Ascending aorta (tissue), 2 donors: ENCODE measurements at regions of chr2 and their contacts with region 1.

Region 1: GRCh38 chr2:43542285-43542937 is 53.4 kb downstream of the THADA start:
- DNase-seq: no peak
- H3K4me3 ChIP-seq: no peak overlapping the region
- H3K27ac ChIP-seq: peak overlapping the region in 1 of 2 donors; percentile 38
- H3K4me1 ChIP-seq: peaks cover 3 to 32% of the 10 kb centered on the region in 2 donors
- H3K27me3 ChIP-seq: no peaks in the 10 kb centered on the region
- CTCF ChIP-seq: peak; percentile 61 to 79 (median 62)

Region 2: GRCh38 chr2:42944779-42945415 is 597.5 kb before region 1 on chr2:
- intact Hi-C with region 1: loop called (anchors 5 kb)
- DNase-seq: no peak
- H3K4me3 ChIP-seq: no peak overlapping the region
- H3K27ac ChIP-seq: no peak overlapping the region
- H3K4me1 ChIP-seq: peaks cover 0 to 3% of the 10 kb centered on the region in 2 donors
- H3K27me3 ChIP-seq: no peaks in the 10 kb centered on the region
- CTCF ChIP-seq: no peak

Region 3: DNA sequence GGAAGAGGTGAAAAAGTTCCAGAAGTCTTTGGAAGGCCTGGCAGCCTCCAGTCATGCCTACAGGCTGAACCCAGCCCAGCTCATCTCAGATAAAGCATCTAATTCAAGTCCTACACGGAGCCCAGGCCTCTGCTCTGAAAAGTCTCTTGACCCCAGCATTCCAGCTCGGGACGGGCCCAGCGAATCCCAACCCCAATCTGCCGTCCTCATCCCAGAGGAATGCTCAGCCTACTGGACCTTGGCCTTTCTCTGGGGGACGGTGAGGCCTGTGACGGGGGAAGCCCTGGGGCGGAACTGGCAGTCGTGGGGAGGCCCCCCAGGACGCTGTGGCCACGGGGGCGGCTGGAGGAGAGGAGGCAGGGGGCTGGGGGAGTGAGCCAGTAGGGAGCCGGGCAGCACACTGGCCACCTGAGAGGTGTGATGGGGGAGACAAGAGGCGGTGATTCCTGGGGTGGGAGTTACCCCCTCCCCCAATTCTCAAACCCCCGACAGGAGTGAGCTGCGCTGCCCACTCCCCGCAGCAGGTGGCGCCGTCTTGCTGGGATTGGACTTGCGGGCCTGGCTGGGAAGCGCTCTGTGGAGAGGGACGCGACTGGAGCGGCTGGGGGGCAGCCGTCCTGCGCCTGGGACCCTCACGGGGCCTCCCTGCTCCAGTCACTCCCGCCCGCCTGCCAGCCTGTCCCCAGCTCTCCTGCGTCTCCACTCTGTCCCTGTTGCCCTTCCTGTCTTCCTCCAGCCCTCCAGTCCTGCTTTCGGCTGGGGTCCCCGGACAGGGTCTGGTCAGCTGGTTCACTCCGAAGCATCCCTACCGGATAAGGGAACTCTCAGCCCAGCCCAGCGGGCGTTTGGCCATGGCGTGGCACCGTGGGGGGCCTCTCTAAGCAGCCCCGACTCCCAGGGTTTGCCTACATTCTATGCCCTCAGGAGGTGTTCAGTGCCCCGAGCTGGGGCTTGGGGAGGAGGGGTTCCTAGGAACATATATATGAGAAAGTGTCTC is 567.4 kb before region 1 on chr2:
- intact Hi-C with region 1: loop called (anchors 2 kb)
- DNase-seq: peak in 1 of 2 donors; percentile 87
- H3K4me3 ChIP-seq: peak overlapping the region; percentile 23 to 66
- H3K27ac ChIP-seq: peak overlapping the region; percentile 28 to 66
- H3K4me1 ChIP-seq: peaks cover 7 to 12% of the 10 kb centered on the region in 2 donors
- H3K27me3 ChIP-seq: no peaks in the 10 kb centered on the region
- CTCF ChIP-seq: peak; percentile 93 to 98 (median 97)

Region 4: GRCh38 chr2:43024515-43025011 is 517.8 kb before region 1 on chr2:
- intact Hi-C with region 1: loop called (anchors 5 kb)
- DNase-seq: peak; percentile 33 to 80
- H3K4me3 ChIP-seq: no peak overlapping the region
- H3K27ac ChIP-seq: no peak overlapping the region
- H3K4me1 ChIP-seq: no peaks in the 10 kb centered on the region
- H3K27me3 ChIP-seq: no peaks in the 10 kb centered on the region
- CTCF ChIP-seq: peak; percentile 84 to 93 (median 89)

Region 5: GRCh38 chr2:43484323-43484930 is 58.0 kb before region 1 on chr2:
- intact Hi-C with region 1: loop called (anchors 2 kb)
- DNase-seq: no peak
- H3K4me3 ChIP-seq: no peak overlapping the region
- H3K27ac ChIP-seq: peak overlapping the region in 1 of 2 donors; percentile 78
- H3K4me1 ChIP-seq: peaks cover 0 to 34% of the 10 kb centered on the region in 2 donors
- H3K27me3 ChIP-seq: no peaks in the 10 kb centered on the region
- CTCF ChIP-seq: peak; percentile 46 to 74 (median 71)

Region 6: DNA sequence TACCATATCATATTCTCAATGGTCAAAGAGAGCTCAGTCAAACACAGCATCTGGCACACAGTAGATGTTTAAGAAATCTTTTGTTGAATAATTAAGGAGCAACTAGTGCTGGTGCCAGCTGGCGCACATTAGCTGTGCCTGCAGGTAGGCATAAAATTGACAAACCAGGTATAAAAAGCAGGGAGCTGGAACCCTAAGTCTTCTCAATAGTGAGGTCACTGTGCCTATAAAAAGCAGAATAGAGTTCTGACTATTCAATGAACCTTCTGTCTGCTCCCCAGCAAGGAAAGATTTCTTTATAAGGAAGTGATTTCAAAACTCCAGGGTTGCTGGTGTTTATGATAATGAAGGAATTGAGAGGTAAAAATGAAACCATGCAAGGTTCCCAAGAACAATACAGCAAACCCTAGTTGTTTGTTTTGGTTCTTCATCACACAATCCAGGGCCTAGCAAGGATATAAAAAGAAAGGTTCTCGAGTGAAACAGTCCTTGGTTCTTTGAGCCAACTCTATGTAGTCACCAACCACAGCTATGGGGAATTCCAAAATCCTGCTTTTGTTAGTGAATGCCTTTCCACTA is 22.7 kb before region 1 on chr2:
- intact Hi-C with region 1: loop called (anchors 2 kb)
- DNase-seq: no peak
- H3K4me3 ChIP-seq: no peak overlapping the region
- H3K27ac ChIP-seq: peak overlapping the region; percentile 86 to 87
- H3K4me1 ChIP-seq: peaks cover 10 to 65% of the 10 kb centered on the region in 2 donors
- H3K27me3 ChIP-seq: no peaks in the 10 kb centered on the region
- CTCF ChIP-seq: no peak

Region 7: GRCh38 chr2:43559391-43560230 is 17.2 kb after region 1 on chr2:
- intact Hi-C with region 1: no loop called
- DNase-seq: no peak
- H3K4me3 ChIP-seq: no peak overlapping the region
- H3K27ac ChIP-seq: no peak overlapping the region
- H3K4me1 ChIP-seq: no peaks in the 10 kb centered on the region
- H3K27me3 ChIP-seq: no peaks in the 10 kb centered on the region
- CTCF ChIP-seq: no peak